Right cardiac atrium (tissue), 5 donors: ENCODE measurements at regions of chr18 and their contacts with region 1.

Region 1: DNA sequence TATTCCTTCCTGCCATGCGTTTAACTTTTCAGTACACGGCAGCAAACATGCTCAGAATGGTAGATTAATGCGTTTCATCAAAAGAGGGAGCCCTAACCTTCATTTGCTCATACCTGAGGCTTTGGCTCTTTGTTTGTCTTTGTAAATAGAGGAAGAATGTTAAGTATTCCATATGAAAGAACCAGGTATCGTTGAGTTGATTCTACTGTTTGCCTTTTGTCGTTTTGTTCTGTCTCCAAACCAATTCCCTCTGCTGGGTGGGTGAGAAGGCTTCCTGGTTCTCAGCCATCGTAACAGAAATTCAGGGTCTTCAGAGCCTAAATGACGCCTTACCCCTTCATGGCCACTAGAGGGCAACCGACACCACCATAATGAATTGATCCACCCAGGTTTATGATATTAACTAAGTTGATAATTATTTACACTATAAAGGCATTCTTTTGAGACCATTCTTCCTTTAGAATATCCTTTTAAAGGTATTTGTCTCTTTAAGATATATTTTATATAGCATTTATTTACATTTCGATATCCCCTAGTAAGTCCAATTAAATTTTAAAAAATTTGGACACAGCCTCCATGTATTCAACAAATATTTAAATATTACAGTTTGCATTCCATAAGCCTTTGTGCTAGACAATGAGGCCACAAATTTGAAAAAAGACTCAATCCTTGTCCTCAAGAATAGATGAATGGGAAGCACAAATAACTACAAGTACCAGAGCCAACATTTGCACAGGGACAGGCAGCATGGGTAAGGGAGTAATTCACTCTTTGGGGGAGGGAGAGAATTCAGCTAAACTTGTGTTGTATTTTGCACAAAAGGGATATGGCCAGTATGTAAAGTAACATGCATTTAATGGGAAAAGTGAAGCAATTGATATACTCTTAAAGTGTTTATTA is 48.1 kb downstream of the TIMM21 start:
- DNase-seq: no peak
- ATAC-seq: peak; percentile 69 to 80
- H3K4me3 ChIP-seq: no peak overlapping the region
- H3K27ac ChIP-seq: no peak overlapping the region
- H3K4me1 ChIP-seq: no peaks in the 10 kb centered on the region
- H3K27me3 ChIP-seq: no peaks in the 10 kb centered on the region

Region 2: DNA sequence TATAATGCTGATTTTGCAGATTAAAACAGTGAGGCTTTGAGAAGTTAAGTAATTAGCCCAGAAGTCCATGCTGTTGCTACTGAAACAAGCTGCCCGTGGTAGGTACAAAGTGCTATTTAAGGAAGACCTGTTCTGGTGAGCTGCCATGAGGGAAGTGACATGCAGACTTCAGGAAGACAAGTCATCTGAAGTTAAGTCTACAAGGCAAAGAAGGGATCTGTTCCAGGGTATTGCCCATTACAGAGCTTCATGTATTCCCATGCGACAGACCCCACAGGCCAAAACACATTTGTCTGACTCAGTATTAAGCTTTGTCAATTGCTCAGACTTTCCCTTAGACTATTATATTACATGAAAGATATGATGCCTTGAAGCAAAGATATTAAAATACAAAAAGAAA is 569.6 kb before region 1 on chr18:
- intact Hi-C with region 1: no loop called
- DNase-seq: no peak
- ATAC-seq: no peak
- H3K4me3 ChIP-seq: no peak overlapping the region
- H3K27ac ChIP-seq: no peak overlapping the region
- H3K4me1 ChIP-seq: no peaks in the 10 kb centered on the region
- H3K27me3 ChIP-seq: no peaks in the 10 kb centered on the region

Region 3: DNA sequence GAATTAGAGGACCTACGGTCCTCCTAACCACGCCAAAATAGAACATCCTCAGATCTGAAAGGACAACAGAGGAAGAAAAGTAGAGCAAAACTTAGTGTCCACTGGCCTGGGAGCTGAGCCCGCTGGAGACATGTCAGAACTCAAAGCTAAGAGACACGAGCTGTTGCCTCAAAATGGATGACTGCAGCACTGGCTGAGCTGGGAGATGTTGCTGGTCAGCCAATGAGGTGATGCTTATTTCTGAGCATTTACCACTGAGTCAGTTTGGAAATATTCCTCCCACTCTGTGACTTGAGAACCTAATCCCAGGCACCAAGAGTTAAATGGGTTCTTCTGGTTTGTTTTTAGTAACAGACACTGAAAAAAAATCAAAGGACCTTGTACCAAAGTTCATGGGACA is 81.4 kb before region 1 on chr18:
- intact Hi-C with region 1: no loop called
- DNase-seq: no peak
- ATAC-seq: no peak
- H3K4me3 ChIP-seq: no peak overlapping the region
- H3K27ac ChIP-seq: no peak overlapping the region
- H3K4me1 ChIP-seq: no peaks in the 10 kb centered on the region
- H3K27me3 ChIP-seq: no peaks in the 10 kb centered on the region

Region 4: GRCh38 chr18:74331404-74331803 is 134.9 kb after region 1 on chr18:
- intact Hi-C with region 1: loop called in 2 of 4 experiments (anchors 5 kb)
- DNase-seq: no peak
- ATAC-seq: peak in 1 of 2 donors; percentile 56
- H3K4me3 ChIP-seq: no peak overlapping the region
- H3K27ac ChIP-seq: no peak overlapping the region
- H3K4me1 ChIP-seq: no peaks in the 10 kb centered on the region
- H3K27me3 ChIP-seq: no peaks in the 10 kb centered on the region

Region 5: DNA sequence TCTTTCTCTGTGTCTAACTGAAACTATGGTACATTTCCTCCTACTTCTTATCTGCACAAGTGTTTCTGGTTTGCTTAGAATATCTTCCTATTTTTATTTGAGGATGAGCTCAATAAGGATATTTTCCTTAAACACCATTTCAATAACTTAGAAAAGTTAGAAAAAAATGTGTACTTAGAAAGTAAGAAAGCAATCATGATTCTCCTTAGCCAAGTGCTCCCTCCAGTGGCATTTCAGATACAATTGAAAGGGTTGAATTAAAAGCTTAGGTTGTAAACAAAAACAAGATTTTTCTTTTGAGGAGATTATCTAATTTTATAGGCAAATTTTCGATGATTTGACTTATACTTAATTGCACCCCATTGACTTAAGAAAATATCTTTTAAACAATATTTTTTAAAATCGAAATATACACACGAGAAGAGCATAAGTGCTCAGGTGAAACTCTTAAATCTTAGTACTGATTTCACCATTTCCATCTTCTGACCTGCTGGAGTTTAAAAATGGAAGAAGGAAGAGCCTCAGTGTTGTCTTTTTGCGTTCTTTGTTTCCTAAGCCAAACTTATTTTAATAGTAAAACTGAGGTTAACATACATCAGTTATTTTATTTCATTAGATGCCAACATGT is 146.1 kb after region 1 on chr18:
- intact Hi-C with region 1: loop called in 2 of 4 experiments (anchors 2 kb)
- DNase-seq: no peak
- ATAC-seq: no peak
- H3K4me3 ChIP-seq: no peak overlapping the region
- H3K27ac ChIP-seq: no peak overlapping the region
- H3K4me1 ChIP-seq: no peaks in the 10 kb centered on the region
- H3K27me3 ChIP-seq: no peaks in the 10 kb centered on the region

Region 6: DNA sequence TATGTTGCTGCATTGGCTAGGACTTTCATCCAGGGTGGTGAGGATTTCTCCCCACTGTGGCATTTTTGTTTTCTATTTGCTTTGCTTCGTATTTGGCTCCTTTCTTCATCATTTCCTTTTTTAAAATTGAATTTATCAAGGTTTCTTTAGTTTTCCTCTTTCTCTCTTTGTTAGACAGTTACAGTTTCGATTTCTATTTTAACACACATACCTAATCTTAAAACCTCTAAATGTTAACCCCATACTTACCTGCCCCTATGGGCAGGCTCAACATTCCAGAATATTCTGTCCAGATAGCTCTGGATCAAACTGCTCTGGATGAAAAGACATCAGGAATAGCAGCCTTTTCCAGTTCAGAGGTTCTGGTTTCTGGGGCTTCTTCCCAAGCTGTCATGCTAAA is 211.4 kb after region 1 on chr18:
- intact Hi-C with region 1: no loop called
- DNase-seq: no peak
- ATAC-seq: no peak
- H3K4me3 ChIP-seq: no peak overlapping the region
- H3K27ac ChIP-seq: no peak overlapping the region
- H3K4me1 ChIP-seq: no peaks in the 10 kb centered on the region
- H3K27me3 ChIP-seq: no peaks in the 10 kb centered on the region

Region 7: GRCh38 chr18:74476140-74476539 is 279.7 kb after region 1 on chr18:
- intact Hi-C with region 1: loop called in 1 of 4 experiments (anchors 10 kb)
- DNase-seq: peak in 1 of 3 donors; percentile 58
- ATAC-seq: no peak
- H3K4me3 ChIP-seq: no peak overlapping the region
- H3K27ac ChIP-seq: no peak overlapping the region
- H3K4me1 ChIP-seq: no peaks in the 10 kb centered on the region
- H3K27me3 ChIP-seq: no peaks in the 10 kb centered on the region

Region 8: GRCh38 chr18:74551936-74552555 is 355.6 kb after region 1 on chr18:
- intact Hi-C with region 1: loop called in 2 of 4 experiments (anchors 10 kb)
- DNase-seq: peak; percentile 81 to 91 (median 87)
- ATAC-seq: peak; percentile 92 to 93
- H3K4me3 ChIP-seq: no peak overlapping the region
- H3K27ac ChIP-seq: no peak overlapping the region
- H3K4me1 ChIP-seq: peaks cover 5% of the 10 kb centered on the region
- H3K27me3 ChIP-seq: no peaks in the 10 kb centered on the region

Region 9: GRCh38 chr18:74745633-74746403 is 549.3 kb after region 1 on chr18:
- intact Hi-C with region 1: no loop called
- DNase-seq: no peak
- ATAC-seq: no peak
- H3K4me3 ChIP-seq: no peak overlapping the region
- H3K27ac ChIP-seq: no peak overlapping the region
- H3K4me1 ChIP-seq: no peaks in the 10 kb centered on the region
- H3K27me3 ChIP-seq: no peaks in the 10 kb centered on the region